Activated CD4-positive, alpha-beta T cell treated with anti-CD3 and anti-CD28 coated beads for 36 hours (primary cell): ENCODE measurements at regions of chr1 and their contacts with region 1.

Region 1: GRCh38 chr1:3772027-3772714 is 378 bp upstream of the SMIM1 start:
- DNase-seq: peak; percentile 94
- ATAC-seq: peak; percentile 81
- H3K4me3 Mint-ChIP-seq: peak overlapping the region; percentile 70
- H3K27ac Mint-ChIP-seq: peak overlapping the region; percentile 78
- H3K4me1 Mint-ChIP-seq: peaks cover 10% of the 10 kb centered on the region
- H3K27me3 Mint-ChIP-seq: no peaks in the 10 kb centered on the region

Region 2: GRCh38 chr1:3530926-3531818 is 241.0 kb before region 1 on chr1:
- CTCF ChIA-PET with region 1: no interaction called
- POLR2A ChIA-PET with region 1: no interaction called
- intact Hi-C with region 1: loop called in 1 of 2 experiments (anchors 1 kb)
- DNase-seq: peak; percentile 88
- ATAC-seq: peak; percentile 87
- H3K4me3 Mint-ChIP-seq: peak overlapping the region; percentile 69
- H3K27ac Mint-ChIP-seq: peak overlapping the region; percentile 87
- H3K4me1 Mint-ChIP-seq: peaks cover 13% of the 10 kb centered on the region
- H3K27me3 Mint-ChIP-seq: no peaks in the 10 kb centered on the region

Region 3: GRCh38 chr1:3598051-3598491 is 174.1 kb before region 1 on chr1:
- CTCF ChIA-PET with region 1: no interaction called
- POLR2A ChIA-PET with region 1: no interaction called
- intact Hi-C with region 1: no loop called
- DNase-seq: no peak
- ATAC-seq: no peak
- H3K4me3 Mint-ChIP-seq: no peak overlapping the region
- H3K27ac Mint-ChIP-seq: no peak overlapping the region
- H3K4me1 Mint-ChIP-seq: peaks cover 15% of the 10 kb centered on the region
- H3K27me3 Mint-ChIP-seq: peaks cover 1% of the 10 kb centered on the region

Region 4: DNA sequence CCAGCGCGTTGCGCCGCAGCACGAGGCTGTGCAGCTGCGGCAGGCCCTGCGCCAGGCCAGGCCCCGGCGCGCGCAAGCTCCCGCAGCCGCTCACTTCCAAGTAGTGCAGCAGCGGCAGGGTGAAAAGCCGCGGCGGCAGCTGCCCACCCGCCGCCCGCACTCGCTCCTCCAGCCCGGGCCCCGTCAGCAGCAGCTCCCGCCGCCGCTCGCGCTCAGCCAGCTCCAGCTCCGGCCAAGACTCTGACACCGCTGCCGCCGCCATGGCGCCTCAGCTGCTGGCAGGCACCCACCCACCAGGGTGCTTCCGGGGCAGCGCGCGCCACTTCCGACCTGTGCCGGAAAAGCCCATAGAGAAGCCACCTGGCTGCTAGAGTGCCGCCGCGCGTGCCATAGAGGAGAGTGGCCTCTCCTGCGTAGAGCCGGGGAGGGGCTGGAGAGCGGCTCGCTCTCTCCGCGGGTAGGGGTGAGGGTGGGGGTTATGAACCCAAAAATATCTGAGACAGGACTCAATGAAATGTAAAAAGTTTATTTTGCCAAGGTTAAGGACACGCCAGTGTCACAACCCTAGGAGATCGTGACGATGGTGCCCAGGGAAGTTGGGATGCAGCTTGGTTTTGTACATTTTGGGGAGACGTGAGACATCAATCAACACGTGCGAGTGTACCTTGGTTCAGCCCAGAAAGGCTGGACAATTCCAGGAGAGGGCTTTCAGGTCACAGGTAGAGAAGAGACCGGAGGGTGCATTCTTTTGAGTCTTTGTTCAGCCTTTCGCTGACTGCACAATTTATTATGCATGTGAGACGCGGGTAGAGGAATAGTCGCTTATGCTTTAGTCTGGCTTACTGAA is 24.3 kb after region 1 on chr1 and contains the start of gene LRRC47:
- CTCF ChIA-PET with region 1: interaction called, 6 read pairs
- POLR2A ChIA-PET with region 1: interaction called, 4 read pairs
- intact Hi-C with region 1: loop called in 1 of 2 experiments (anchors 1 kb)
- DNase-seq: peak; percentile 97
- ATAC-seq: peak; percentile 99
- H3K4me3 Mint-ChIP-seq: peak within 1 kb of the TSS; percentile 81
- H3K27ac Mint-ChIP-seq: peak within 1 kb of the TSS; percentile 87
- H3K4me1 Mint-ChIP-seq: peaks cover 44% of the 10 kb centered on the region
- H3K27me3 Mint-ChIP-seq: peaks cover 6% of the 10 kb centered on the region
- total RNA-seq, gene LRRC47: 34.8 to 38.7 TPM

Region 5: DNA sequence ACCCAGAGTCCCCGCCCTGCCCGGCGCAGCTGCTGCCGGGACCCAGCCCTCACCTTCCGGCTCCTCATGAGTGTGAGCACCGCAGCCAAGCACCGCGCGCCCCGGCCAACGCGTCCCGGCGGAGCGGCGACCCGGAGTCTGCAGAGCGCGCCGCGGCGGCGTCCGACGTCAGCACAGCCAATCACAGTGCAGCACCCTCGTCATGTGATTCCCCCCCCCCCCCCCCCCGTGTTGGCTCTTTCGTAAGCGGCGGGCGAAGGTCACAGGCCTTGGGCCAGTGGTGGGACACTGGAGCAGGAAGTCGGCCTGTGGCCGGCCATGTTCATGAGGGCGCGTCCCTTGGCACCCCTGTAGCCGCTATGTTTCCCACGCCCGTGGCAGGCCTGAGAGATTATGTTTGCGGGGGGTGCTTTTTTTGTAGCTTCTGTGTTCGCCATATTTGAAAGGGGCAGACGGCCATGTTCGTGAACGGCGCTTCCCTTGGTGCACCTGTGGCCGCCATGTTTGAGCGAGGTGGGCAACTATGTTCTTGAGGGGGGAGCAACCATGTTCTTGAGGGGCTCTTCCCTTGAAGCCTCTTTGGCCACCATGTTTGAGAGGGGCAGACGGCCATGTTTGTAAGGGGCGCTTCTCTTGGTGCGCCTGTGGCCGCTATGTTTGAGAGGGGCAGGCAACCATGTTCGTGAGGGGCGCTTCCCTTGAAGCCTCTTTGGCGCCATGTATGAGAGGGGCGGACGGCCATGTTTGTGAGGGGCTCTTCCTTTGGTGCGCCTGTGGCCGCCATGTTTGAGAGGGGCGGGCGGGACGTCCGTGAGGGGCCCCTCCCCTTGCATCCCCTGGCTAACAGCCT is 128.2 kb after region 1 on chr1 and contains the start of gene C1orf174:
- CTCF ChIA-PET with region 1: no interaction called
- POLR2A ChIA-PET with region 1: no interaction called
- intact Hi-C with region 1: loop called (anchors 1 kb)
- DNase-seq: peak; percentile 94
- ATAC-seq: peak; percentile 76
- H3K4me3 Mint-ChIP-seq: peak within 1 kb of the TSS; percentile 87
- H3K27ac Mint-ChIP-seq: peak within 1 kb of the TSS; percentile 98
- H3K4me1 Mint-ChIP-seq: peaks cover 51% of the 10 kb centered on the region
- H3K27me3 Mint-ChIP-seq: no peaks in the 10 kb centered on the region
- total RNA-seq, gene C1orf174: 39.8 to 49.4 TPM